OCI-LY7 (cell line): ENCODE measurements at regions of chr1 and their contacts with region 1.

Region 1: GRCh38 chr1:226201029-226201593 is 14.6 kb upstream of the ACBD3 start:
- DNase-seq: peak; percentile 79
- H3K4me3 ChIP-seq: no peak overlapping the region
- H3K27ac ChIP-seq: peak overlapping the region; percentile 24
- H3K4me1 ChIP-seq: peaks cover 48% of the 10 kb centered on the region
- CTCF ChIP-seq: peak; percentile 91

Region 2: GRCh38 chr1:225378880-225379279 is 822.2 kb before region 1 on chr1:
- CTCF ChIA-PET with region 1: no interaction called
- POLR2A ChIA-PET with region 1: no interaction called
- intact Hi-C with region 1: no loop called
- DNase-seq: no peak
- H3K4me3 ChIP-seq: no peak overlapping the region
- H3K27ac ChIP-seq: no peak overlapping the region
- H3K4me1 ChIP-seq: no peaks in the 10 kb centered on the region
- CTCF ChIP-seq: no peak

Region 3: DNA sequence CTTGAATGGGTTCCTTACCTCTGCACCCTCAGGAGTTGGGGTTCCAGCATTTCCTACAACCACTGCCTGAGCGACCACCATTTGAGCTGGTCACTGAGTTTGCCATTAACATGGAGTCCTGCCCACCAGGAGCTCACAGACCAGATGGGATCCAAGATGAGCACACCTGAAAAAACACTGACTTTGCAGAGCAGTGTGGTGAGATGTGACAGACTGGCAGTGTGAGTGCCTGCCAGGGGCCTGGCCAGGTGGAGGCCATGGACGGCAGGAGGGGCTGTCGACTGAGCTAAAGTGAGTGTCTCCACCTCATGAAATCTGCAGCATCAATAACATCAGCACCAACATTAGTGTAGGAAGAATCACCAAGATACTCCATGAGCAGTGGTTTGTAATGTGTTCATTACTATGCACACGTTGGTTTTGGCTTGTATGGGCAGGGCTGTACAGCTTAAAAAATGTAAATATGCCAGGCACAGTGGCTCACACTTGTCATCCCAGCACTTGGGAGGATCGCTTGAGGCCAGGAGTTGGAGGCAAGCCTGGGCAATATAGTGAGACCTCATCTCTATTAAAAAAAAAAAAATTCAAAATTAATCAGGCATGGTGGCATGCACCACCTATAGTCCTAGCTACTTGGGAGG is 10.2 kb after region 1 on chr1:
- CTCF ChIA-PET with region 1: interaction called, 3 read pairs
- POLR2A ChIA-PET with region 1: interaction called, 10 read pairs
- intact Hi-C with region 1: no loop called
- DNase-seq: no peak
- H3K4me3 ChIP-seq: no peak overlapping the region
- H3K27ac ChIP-seq: no peak overlapping the region
- H3K4me1 ChIP-seq: peaks cover 28% of the 10 kb centered on the region
- CTCF ChIP-seq: no peak

Region 4: GRCh38 chr1:226332947-226333346 is 131.8 kb after region 1 on chr1:
- CTCF ChIA-PET with region 1: interaction called, 11 read pairs
- POLR2A ChIA-PET with region 1: interaction called, 16 read pairs
- intact Hi-C with region 1: loop called (anchors 1 kb)
- DNase-seq: peak; percentile 40
- H3K4me3 ChIP-seq: peak overlapping the region; percentile 55
- H3K27ac ChIP-seq: peak overlapping the region; percentile 69
- H3K4me1 ChIP-seq: peaks cover 62% of the 10 kb centered on the region
- CTCF ChIP-seq: no peak

Region 5: GRCh38 chr1:226457307-226457712 is 256.2 kb after region 1 on chr1:
- CTCF ChIA-PET with region 1: no interaction called
- POLR2A ChIA-PET with region 1: no interaction called
- intact Hi-C with region 1: no loop called
- DNase-seq: no peak
- H3K4me3 ChIP-seq: no peak overlapping the region
- H3K27ac ChIP-seq: no peak overlapping the region
- H3K4me1 ChIP-seq: peaks cover 14% of the 10 kb centered on the region
- CTCF ChIP-seq: peak; percentile 66